ENCODE measurements at regions of chr9 and their contacts with region 1.

Region 1: DNA sequence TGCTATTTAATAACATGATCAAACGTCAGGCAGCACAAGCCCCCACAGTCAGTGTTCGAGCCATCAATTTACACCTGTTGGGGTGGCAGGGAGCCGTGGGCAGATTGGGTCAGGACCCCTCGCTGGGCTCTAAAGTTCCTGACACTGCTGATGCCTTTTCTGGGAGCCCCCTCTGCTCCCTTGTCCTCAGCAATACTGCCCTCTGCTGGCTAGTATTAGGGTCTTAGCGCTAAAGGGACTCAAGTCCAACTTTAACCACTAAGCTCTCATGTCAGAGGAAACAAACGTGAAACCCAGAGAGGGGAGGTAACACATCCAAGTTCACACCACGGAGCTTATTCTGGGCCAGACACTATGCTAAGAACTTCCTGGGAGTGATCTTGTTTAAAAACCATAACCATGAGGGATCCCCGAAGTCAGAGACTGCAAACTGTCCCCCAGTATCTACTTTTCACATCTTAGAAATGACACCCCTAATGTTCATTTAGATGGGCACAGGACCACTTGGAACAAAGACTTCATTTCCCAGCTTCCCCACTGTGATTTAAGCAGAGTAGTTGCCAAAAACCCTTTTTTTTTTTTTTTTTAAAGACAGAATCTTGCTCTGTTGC is 20.4 kb downstream of the ANKS6 start:
- DNase-seq: no peak
- ATAC-seq: peak in 1 of 2 donors; percentile 67
- H3K4me3 ChIP-seq: no peak overlapping the region
- H3K27ac ChIP-seq: no peak overlapping the region
- H3K4me1 ChIP-seq: no peaks in the 10 kb centered on the region
- H3K27me3 ChIP-seq: no peaks in the 10 kb centered on the region

Region 2: DNA sequence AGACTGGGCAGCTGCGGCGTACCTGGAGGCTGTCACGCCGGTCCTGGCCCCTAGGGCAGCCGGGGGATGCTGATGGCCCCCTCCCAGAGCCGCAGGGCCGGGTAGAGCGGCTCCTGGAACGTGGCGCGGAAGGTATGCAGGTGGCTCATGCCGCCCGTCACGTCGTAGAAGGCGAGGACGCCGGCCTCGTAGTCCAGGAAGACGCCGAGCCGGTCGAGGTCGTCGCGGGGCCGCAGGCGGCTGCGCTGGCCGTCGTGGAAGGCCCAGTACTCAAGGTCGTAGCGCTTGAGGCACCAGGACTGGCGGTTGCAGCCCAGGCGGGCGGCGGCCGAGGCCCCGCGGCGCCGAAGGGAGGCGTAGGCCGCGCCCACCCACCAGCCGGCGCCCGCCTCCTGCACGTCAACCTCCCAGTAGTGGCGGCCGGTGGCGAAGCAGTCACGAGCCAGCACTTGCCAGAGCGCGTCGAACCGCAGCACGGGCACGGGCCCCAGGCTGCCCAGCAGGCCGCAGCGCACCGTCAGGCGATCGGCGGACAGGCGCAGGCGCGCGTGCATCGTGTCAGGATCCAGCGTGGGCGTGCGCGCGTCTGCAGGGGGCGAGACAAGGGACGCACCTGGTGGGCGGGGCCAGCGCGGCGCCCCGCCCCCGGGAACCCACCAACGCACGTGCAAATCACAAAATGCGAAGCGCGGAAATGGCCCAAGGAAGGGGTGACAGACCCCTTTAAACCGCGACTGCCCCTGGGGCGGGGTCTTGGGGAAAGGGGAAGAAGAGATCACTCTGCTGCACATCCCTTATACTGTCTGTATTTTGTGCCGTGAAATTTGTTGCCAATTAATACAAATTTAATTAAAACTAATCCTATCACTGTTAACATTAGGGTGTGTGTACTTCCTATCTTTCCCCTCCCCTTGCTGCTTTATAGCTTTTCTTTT is 688.2 kb before region 1 on chr9:
- intact Hi-C with region 1: no loop called
- DNase-seq: peak; percentile 49 to 75 (median 73)
- ATAC-seq: peak; percentile 80 to 88
- H3K4me3 ChIP-seq: peak overlapping the region; percentile 2
- H3K27ac ChIP-seq: no peak overlapping the region
- H3K4me1 ChIP-seq: peaks cover 2% of the 10 kb centered on the region
- H3K27me3 ChIP-seq: no peaks in the 10 kb centered on the region

Region 3: GRCh38 chr9:98207606-98208005 is 568.3 kb before region 1 on chr9:
- intact Hi-C with region 1: loop called in 1 of 4 experiments (anchors 10 kb)
- DNase-seq: no peak
- ATAC-seq: no peak
- H3K4me3 ChIP-seq: no peak overlapping the region
- H3K27ac ChIP-seq: no peak overlapping the region
- H3K4me1 ChIP-seq: no peaks in the 10 kb centered on the region
- H3K27me3 ChIP-seq: no peaks in the 10 kb centered on the region

Region 4: DNA sequence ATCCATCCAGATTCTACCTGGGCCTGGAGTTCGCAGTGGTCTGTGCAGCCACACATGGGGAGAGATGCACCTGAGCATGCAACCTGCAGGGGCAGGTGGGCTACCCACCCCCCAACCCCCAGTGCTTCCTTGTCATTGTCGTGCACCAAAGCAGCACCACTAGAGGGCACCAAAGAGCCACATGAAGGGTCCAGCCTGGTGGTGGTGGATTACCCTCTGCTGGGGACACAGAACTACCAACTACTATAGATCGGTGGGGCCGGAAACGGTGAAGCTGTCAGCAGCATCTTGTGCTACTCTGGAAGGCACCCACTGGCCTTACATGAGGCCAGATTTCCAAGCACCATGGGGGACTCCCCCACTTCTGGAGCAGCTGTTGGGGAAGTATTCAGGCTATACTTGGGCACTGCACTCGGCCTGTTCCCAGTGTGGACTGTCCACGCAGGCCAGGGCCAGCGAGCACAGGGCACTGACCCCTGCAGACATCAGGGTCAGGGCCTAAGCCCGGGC is 460.3 kb before region 1 on chr9:
- intact Hi-C with region 1: loop called (anchors 2 to 5 kb)
- DNase-seq: peak; percentile 66 to 89 (median 84)
- ATAC-seq: peak; percentile 86 to 89
- H3K4me3 ChIP-seq: no peak overlapping the region
- H3K27ac ChIP-seq: no peak overlapping the region
- H3K4me1 ChIP-seq: no peaks in the 10 kb centered on the region
- H3K27me3 ChIP-seq: no peaks in the 10 kb centered on the region

Region 5: DNA sequence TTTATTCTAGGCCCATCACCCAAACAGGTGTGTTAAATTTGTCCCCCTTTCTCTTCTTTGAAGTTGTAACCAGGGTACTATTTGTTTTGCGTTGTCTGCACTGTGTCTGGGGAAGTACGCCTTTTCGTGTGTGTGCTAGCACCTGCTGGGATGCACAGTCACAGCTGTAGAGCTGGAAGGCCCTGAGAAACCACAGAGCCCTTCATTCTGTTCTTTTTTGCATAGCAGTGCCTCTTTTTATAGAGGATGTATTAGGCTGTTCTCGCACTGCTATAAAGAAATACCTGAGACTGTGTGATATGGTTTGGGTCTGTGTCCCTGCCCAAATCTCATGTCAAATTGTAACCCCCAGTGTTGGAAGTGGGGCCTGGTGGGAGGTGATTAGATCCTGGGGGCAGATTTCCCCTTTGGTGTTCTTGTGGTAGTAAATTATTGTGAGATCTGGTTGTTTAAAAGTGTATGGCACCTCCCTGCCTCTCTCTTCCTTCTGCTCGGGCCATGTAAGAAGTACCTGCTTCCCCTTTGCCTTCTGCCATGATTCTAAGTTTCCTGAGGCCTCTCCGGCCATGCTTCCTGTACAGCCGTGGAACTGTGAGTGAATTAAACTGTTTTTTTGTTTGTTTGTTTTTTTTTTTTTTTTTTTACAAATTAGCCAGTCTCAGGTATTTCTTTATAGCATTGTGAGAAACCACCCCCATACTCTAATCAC is 460.1 kb after region 1 on chr9:
- intact Hi-C with region 1: no loop called
- DNase-seq: no peak
- ATAC-seq: no peak
- H3K4me3 ChIP-seq: no peak overlapping the region
- H3K27ac ChIP-seq: no peak overlapping the region
- H3K4me1 ChIP-seq: peaks cover 7% of the 10 kb centered on the region
- H3K27me3 ChIP-seq: no peaks in the 10 kb centered on the region

Region 6: DNA sequence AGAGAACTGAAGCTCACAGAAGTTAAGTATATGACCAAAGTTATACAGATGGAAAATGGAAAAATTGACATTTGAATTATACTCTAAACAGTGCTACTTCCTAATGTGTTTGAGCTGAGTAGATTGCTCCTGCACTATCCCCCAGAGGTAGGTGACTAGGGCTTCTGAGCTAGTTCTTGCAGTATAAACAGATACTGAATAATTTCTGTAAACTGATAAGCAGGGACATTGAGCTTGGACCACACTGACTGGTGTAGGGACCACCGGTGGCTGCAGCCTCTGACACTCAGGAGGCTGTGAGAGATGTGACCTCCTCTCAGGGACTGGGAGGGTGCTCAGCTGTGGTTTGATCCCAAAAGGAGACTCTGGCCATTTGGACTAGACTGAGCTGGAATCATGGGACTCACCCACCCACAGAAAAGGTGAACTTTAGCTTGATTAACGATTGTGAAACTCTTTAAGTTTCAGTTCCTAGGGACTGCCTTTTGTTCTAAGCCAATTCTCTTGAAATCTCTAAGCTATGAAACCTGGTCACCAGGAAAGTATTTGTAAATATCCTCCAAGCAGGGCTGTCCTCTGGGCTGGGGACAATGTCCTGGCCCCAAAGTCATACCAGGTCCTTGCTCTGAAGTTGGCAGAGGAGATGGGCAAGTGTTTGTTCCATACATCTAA is 737.6 kb after region 1 on chr9:
- intact Hi-C with region 1: no loop called
- DNase-seq: no peak
- ATAC-seq: no peak
- H3K4me3 ChIP-seq: no peak overlapping the region
- H3K27ac ChIP-seq: no peak overlapping the region
- H3K4me1 ChIP-seq: no peaks in the 10 kb centered on the region
- H3K27me3 ChIP-seq: no peaks in the 10 kb centered on the region

Measured in right cardiac atrium (tissue), 5 donors.